ENCODE measurements at regions of chr6 and their contacts with region 1.

Region 1: GRCh38 chr6:36885461-36886401 is at the start of gene C6orf89:
- DNase-seq: peak; percentile 86 to 98 (median 95)
- ATAC-seq: peak; percentile 100
- H3K4me3 ChIP-seq: peak within 1 kb of the TSS; percentile 96
- H3K4me3 Mint-ChIP-seq: peak within 1 kb of the TSS; percentile 83 to 92 (median 90)
- H3K27ac ChIP-seq: peak within 1 kb of the TSS; percentile 81
- H3K27ac Mint-ChIP-seq: peak within 1 kb of the TSS; percentile 90 to 97 (median 95)
- H3K4me1 ChIP-seq: peaks cover 16 to 24% of the 10 kb centered on the region in 2 donors
- H3K4me1 Mint-ChIP-seq: peaks cover 25 to 47% (median 39%) of the 10 kb centered on the region in 7 donors
- H3K27me3 ChIP-seq: no peaks in the 10 kb centered on the region
- H3K27me3 Mint-ChIP-seq: no peaks in the 10 kb centered on the region
- total RNA-seq, gene C6orf89: 34.6 to 48.2 (median 47.7) TPM

Region 2: GRCh38 chr6:36839749-36840431 is 45.8 kb before region 1 on chr6:
- CTCF ChIA-PET with region 1: no interaction called
- POLR2A ChIA-PET with region 1: no interaction called
- intact Hi-C with region 1: no loop called
- DNase-seq: peak; percentile 10 to 69 (median 47)
- ATAC-seq: peak; percentile 86
- H3K4me3 ChIP-seq: peak overlapping the region; percentile 47
- H3K4me3 Mint-ChIP-seq: peak overlapping the region; percentile 72 to 85 (median 78)
- H3K27ac ChIP-seq: no peak overlapping the region
- H3K27ac Mint-ChIP-seq: peak overlapping the region in 3 of 9 donors; percentile 14 to 64 (median 53)
- H3K4me1 ChIP-seq: peaks cover 3 to 5% of the 10 kb centered on the region in 2 donors
- H3K4me1 Mint-ChIP-seq: peaks cover 0 to 14% (median 13%) of the 10 kb centered on the region in 7 donors
- H3K27me3 ChIP-seq: peaks cover 4 to 24% of the 10 kb centered on the region in 2 donors
- H3K27me3 Mint-ChIP-seq: peaks cover 19 to 49% (median 22%) of the 10 kb centered on the region in 5 donors

Region 3: GRCh38 chr6:36874443-36875249 is 11.1 kb before region 1 on chr6 and contains the start of gene PPIL1:
- CTCF ChIA-PET with region 1: interaction called, 33 read pairs
- POLR2A ChIA-PET with region 1: interaction called, 45 read pairs
- intact Hi-C with region 1: loop called (anchors 1 kb)
- DNase-seq: peak; percentile 75 to 92 (median 90)
- ATAC-seq: peak; percentile 92
- H3K4me3 ChIP-seq: peak within 1 kb of the TSS; percentile 92
- H3K4me3 Mint-ChIP-seq: peak within 1 kb of the TSS; percentile 85 to 100 (median 98)
- H3K27ac ChIP-seq: peak within 1 kb of the TSS; percentile 87
- H3K27ac Mint-ChIP-seq: peak within 1 kb of the TSS; percentile 97 to 100 (median 98)
- H3K4me1 ChIP-seq: peaks cover 8 to 21% of the 10 kb centered on the region in 2 donors
- H3K4me1 Mint-ChIP-seq: peaks cover 13 to 54% (median 47%) of the 10 kb centered on the region in 7 donors
- H3K27me3 ChIP-seq: no peaks in the 10 kb centered on the region
- H3K27me3 Mint-ChIP-seq: peaks cover 0 to 7% (median 5%) of the 10 kb centered on the region in 5 donors
- total RNA-seq, gene PPIL1: 3.5 to 34.7 (median 10.3) TPM

Region 4: GRCh38 chr6:36962874-36963273 is 77.1 kb after region 1 on chr6:
- CTCF ChIA-PET with region 1: no interaction called
- POLR2A ChIA-PET with region 1: interaction called, 4 read pairs
- intact Hi-C with region 1: loop called in 1 of 2 experiments (anchors 1 kb)
- DNase-seq: peak; percentile 69 to 89 (median 81)
- ATAC-seq: peak; percentile 82
- H3K4me3 ChIP-seq: no peak overlapping the region
- H3K4me3 Mint-ChIP-seq: peak overlapping the region in 9 of 10 donors; percentile 57 to 80 (median 70)
- H3K27ac ChIP-seq: peak overlapping the region; percentile 40
- H3K27ac Mint-ChIP-seq: peak overlapping the region; percentile 74 to 96 (median 93)
- H3K4me1 ChIP-seq: peaks cover 19 to 24% of the 10 kb centered on the region in 2 donors
- H3K4me1 Mint-ChIP-seq: peaks cover 20 to 55% (median 37%) of the 10 kb centered on the region in 7 donors
- H3K27me3 ChIP-seq: no peaks in the 10 kb centered on the region
- H3K27me3 Mint-ChIP-seq: no peaks in the 10 kb centered on the region

Region 5: GRCh38 chr6:36985808-36986703 is 100.3 kb after region 1 on chr6 and contains the start of gene MTCH1:
- CTCF ChIA-PET with region 1: interaction called, 10 read pairs
- POLR2A ChIA-PET with region 1: interaction called, 30 read pairs
- intact Hi-C with region 1: loop called (anchors 1 kb)
- DNase-seq: peak; percentile 85 to 98 (median 92)
- ATAC-seq: peak; percentile 93
- H3K4me3 ChIP-seq: peak within 1 kb of the TSS; percentile 98
- H3K4me3 Mint-ChIP-seq: peak within 1 kb of the TSS in 6 of 10 donors; percentile 98 to 100 (median 100)
- H3K27ac ChIP-seq: peak within 1 kb of the TSS; percentile 96
- H3K27ac Mint-ChIP-seq: peak within 1 kb of the TSS in 7 of 9 donors; percentile 98 to 99 (median 99)
- H3K4me1 ChIP-seq: peaks cover 22 to 27% of the 10 kb centered on the region in 2 donors
- H3K4me1 Mint-ChIP-seq: peaks cover 12 to 26% (median 18%) of the 10 kb centered on the region in 7 donors
- H3K27me3 ChIP-seq: no peaks in the 10 kb centered on the region
- H3K27me3 Mint-ChIP-seq: peaks cover 0 to 17% (median 0%) of the 10 kb centered on the region in 5 donors
- total RNA-seq, gene MTCH1: 123 to 198 (median 130) TPM

Region 6: GRCh38 chr6:37125783-37126492 is 240.2 kb after region 1 on chr6:
- CTCF ChIA-PET with region 1: no interaction called
- POLR2A ChIA-PET with region 1: no interaction called
- intact Hi-C with region 1: no loop called
- DNase-seq: no peak
- ATAC-seq: no peak
- H3K4me3 ChIP-seq: no peak overlapping the region
- H3K4me3 Mint-ChIP-seq: no peak overlapping the region
- H3K27ac ChIP-seq: no peak overlapping the region
- H3K27ac Mint-ChIP-seq: peak overlapping the region in 1 of 9 donors; percentile 38
- H3K4me1 ChIP-seq: no peaks in the 10 kb centered on the region
- H3K4me1 Mint-ChIP-seq: peaks cover 0 to 9% (median 0%) of the 10 kb centered on the region in 7 donors
- H3K27me3 ChIP-seq: no peaks in the 10 kb centered on the region
- H3K27me3 Mint-ChIP-seq: peaks cover 4 to 14% (median 5%) of the 10 kb centered on the region in 5 donors

Region 7: GRCh38 chr6:37257634-37258404 is 372.1 kb after region 1 on chr6 and contains the starts of genes TBC1D22B and TMEM217:
- CTCF ChIA-PET with region 1: no interaction called
- POLR2A ChIA-PET with region 1: no interaction called
- intact Hi-C with region 1: loop called in 1 of 2 experiments (anchors 1 kb)
- DNase-seq: peak; percentile 85 to 94 (median 93)
- ATAC-seq: peak; percentile 100
- H3K4me3 ChIP-seq: peak within 1 kb of the TSS; percentile 92
- H3K4me3 Mint-ChIP-seq: peak within 1 kb of the TSS; percentile 80 to 99 (median 90)
- H3K27ac ChIP-seq: peak within 1 kb of the TSS; percentile 87
- H3K27ac Mint-ChIP-seq: peak within 1 kb of the TSS; percentile 71 to 95 (median 88)
- H3K4me1 ChIP-seq: peaks cover 18 to 21% of the 10 kb centered on the region in 2 donors
- H3K4me1 Mint-ChIP-seq: peaks cover 30 to 58% (median 45%) of the 10 kb centered on the region in 7 donors
- H3K27me3 ChIP-seq: no peaks in the 10 kb centered on the region
- H3K27me3 Mint-ChIP-seq: no peaks in the 10 kb centered on the region
- total RNA-seq, gene TBC1D22B: 8.3 to 23.5 (median 9.5) TPM
- total RNA-seq, gene TMEM217: 0.78 to 2.8 (median 1.6) TPM in 3 of 5 experiments, not detected in the others

Measured in naive thymus-derived CD4-positive, alpha-beta T cell (primary cell).